H1 (cell line): ENCODE measurements at regions of chrX and their contacts with region 1.

Region 1: DNA sequence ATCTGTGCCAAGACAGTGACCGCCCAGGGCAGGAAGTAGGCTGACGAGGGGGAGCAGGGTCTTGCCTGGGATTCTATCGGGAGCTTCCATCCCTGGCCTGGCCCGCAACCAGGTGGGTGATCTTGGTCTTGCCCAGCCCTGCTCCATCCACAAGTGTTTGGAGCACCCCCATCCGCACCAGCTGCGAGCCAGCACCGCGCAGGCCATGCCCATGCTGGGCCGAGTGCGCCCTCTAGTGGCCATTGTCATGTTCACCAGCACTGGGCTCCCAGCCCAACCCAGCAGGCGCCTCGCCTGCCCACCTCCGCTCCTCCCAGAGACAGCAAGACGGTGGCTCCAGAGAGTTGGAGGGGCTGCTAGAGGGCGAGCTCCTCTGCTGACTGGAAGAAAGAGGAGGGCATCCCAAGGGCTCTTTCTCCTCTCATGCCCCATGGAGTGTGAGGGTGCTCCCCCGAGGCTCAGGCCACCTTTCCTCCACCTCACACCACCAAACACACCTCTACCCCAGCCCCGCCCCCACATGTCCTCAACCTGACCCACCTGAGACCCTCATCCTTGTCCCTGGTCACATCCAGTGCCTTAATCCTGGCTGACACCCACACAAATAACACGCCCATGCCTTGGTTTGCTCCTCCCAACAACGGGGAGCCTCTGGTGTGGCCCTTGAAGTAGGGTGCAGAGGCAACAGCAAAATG is 9.8 kb upstream of the ATP2B3 start:
- DNase-seq: peak; percentile 43 to 91
- H3K4me3 ChIP-seq: no peak overlapping the region
- H3K27ac ChIP-seq: no peak overlapping the region
- H3K4me1 ChIP-seq: peaks cover 0 to 1% (median 0%) of the 10 kb centered on the region in 4 experiments; a peak in 2 of 7 replicates
- H3K27me3 ChIP-seq: no peaks in the 10 kb centered on the region
- CTCF ChIP-seq: peak in 2 of 3 experiments; percentile 84 to 92; a peak in 3 of 4 replicates
- EP300 ChIP-seq: no peak
- POLR2A ChIP-seq: no peak
- RAD21 ChIP-seq: peak; percentile 84 to 92

Region 2: GRCh38 chrX:153336121-153336894 is 171.3 kb before region 1 on chrX:
- CTCF ChIA-PET with region 1: no interaction called
- POLR2A ChIA-PET with region 1: no interaction called
- DNase-seq: no peak
- H3K4me3 ChIP-seq: no peak overlapping the region
- H3K27ac ChIP-seq: no peak overlapping the region
- H3K4me1 ChIP-seq: peaks cover 0 to 6% (median 0%) of the 10 kb centered on the region in 4 experiments; a peak in 1 of 7 replicates
- H3K27me3 ChIP-seq: no peaks in the 10 kb centered on the region
- CTCF ChIP-seq: no peak
- EP300 ChIP-seq: no peak
- POLR2A ChIP-seq: no peak
- RAD21 ChIP-seq: no peak

Region 3: DNA sequence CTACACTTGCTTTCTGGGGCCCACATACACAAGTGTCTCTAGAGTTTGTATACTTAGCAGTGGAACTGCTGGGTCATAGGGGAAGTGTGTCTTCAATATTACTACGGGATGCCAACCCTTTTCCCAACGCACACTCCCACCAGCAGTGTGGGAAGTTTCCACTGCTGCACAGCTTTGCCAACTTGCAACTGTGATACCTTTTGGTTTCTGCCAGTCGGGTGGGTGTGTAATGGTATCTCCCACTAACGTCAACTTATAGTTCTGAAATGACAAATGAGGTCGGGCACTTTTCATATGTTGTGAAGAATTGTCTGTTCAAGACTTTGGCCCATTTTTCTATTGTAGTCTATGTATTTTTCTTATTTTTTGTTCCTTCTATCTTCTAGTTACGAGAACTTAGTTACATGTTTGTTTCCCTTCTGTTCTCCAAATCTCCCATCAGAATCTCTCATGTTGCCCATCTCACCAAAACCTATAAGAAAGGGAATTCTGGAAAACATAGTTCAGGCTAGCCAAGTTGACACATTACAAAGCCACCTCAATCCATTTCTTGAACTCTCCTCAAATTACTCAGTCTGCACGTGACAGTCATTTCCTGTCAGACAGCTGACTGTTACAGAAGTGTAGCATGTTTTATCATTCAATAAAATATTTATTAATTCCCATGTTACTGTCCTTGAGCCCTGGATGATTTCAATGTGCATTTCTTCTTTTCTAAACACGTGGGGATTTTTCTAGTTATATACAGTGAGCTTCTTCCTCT is 137.2 kb before region 1 on chrX:
- CTCF ChIA-PET with region 1: no interaction called
- POLR2A ChIA-PET with region 1: no interaction called
- DNase-seq: no peak
- H3K4me3 ChIP-seq: no peak overlapping the region
- H3K27ac ChIP-seq: no peak overlapping the region
- H3K4me1 ChIP-seq: no peaks in the 10 kb centered on the region
- H3K27me3 ChIP-seq: no peaks in the 10 kb centered on the region
- CTCF ChIP-seq: no peak
- EP300 ChIP-seq: no peak
- POLR2A ChIP-seq: no peak
- RAD21 ChIP-seq: no peak

Region 4: GRCh38 chrX:153460845-153461244 is 46.8 kb before region 1 on chrX:
- CTCF ChIA-PET with region 1: interaction called, 21 read pairs
- POLR2A ChIA-PET with region 1: no interaction called
- DNase-seq: no peak
- H3K4me3 ChIP-seq: no peak overlapping the region
- H3K27ac ChIP-seq: no peak overlapping the region
- H3K4me1 ChIP-seq: no peaks in the 10 kb centered on the region
- H3K27me3 ChIP-seq: no peaks in the 10 kb centered on the region
- CTCF ChIP-seq: peak in 2 of 3 experiments; percentile 73 to 76; a peak in 3 of 4 replicates
- EP300 ChIP-seq: no peak
- POLR2A ChIP-seq: no peak
- RAD21 ChIP-seq: peak; percentile 48 to 59

Region 5: GRCh38 chrX:153470435-153471363 is 36.9 kb before region 1 on chrX and contains the start of gene HAUS7:
- CTCF ChIA-PET with region 1: interaction called, 84 read pairs
- POLR2A ChIA-PET with region 1: interaction called, 3 read pairs
- DNase-seq: peak; percentile 65 to 88
- H3K4me3 ChIP-seq: peak within 1 kb of the TSS; percentile 53 to 82 (median 76)
- H3K27ac ChIP-seq: no peak within 1 kb of the TSS
- H3K4me1 ChIP-seq: peaks cover 0 to 9% (median 0%) of the 10 kb centered on the region in 4 experiments; a peak in 1 of 7 replicates
- H3K27me3 ChIP-seq: peaks cover 3 to 15% (median 11%) of the 10 kb centered on the region in 4 experiments; a peak in 6 of 7 replicates
- CTCF ChIP-seq: peak in 2 of 3 experiments; percentile 78 to 98; a peak in 3 of 4 replicates
- EP300 ChIP-seq: no peak
- POLR2A ChIP-seq: peak in 1 of 2 experiments; percentile 42; a peak in 1 of 3 replicates
- RAD21 ChIP-seq: peak; percentile 65 to 71
- total RNA-seq, gene HAUS7: 53.4 and 54.0 TPM in 2 replicates

Region 6: GRCh38 chrX:153494541-153495361 is 12.9 kb before region 1 on chrX and contains the start of gene BGN:
- CTCF ChIA-PET with region 1: interaction called, 50 read pairs
- POLR2A ChIA-PET with region 1: no interaction called
- DNase-seq: peak in 1 of 2 experiments; percentile 55
- H3K4me3 ChIP-seq: peak within 1 kb of the TSS in 3 of 4 experiments; percentile 3 to 52 (median 6); a peak in 4 of 8 replicates
- H3K27ac ChIP-seq: no peak within 1 kb of the TSS
- H3K4me1 ChIP-seq: peaks cover 0 to 18% (median 5%) of the 10 kb centered on the region in 4 experiments; a peak in 3 of 7 replicates
- H3K27me3 ChIP-seq: peaks cover 0 to 2% (median 0%) of the 10 kb centered on the region in 4 experiments; a peak in 5 of 7 replicates
- CTCF ChIP-seq: peak in 2 of 3 experiments; percentile 35 to 56; a peak in 3 of 4 replicates
- EP300 ChIP-seq: no peak
- POLR2A ChIP-seq: no peak
- RAD21 ChIP-seq: peak; percentile 54 to 59
- total RNA-seq, gene BGN: 2.1 and 2.4 TPM in 2 replicates